ENCODE measurements at regions of chr5 and their contacts with region 1.

Region 1: GRCh38 chr5:35777358-35778087 is 79.2 kb upstream of the IL7R start:
- DNase-seq: peak; percentile 88
- H3K4me3 Mint-ChIP-seq: peak overlapping the region; percentile 46
- H3K27ac Mint-ChIP-seq: peak overlapping the region; percentile 85
- H3K4me1 Mint-ChIP-seq: peaks cover 74% of the 10 kb centered on the region
- H3K27me3 Mint-ChIP-seq: no peaks in the 10 kb centered on the region

Region 2: GRCh38 chr5:35478856-35479682 is 298.5 kb before region 1 on chr5:
- CTCF ChIA-PET with region 1: no interaction called
- intact Hi-C with region 1: no loop called
- DNase-seq: no peak
- H3K4me3 Mint-ChIP-seq: peak overlapping the region; percentile 51
- H3K27ac Mint-ChIP-seq: peak overlapping the region; percentile 81
- H3K4me1 Mint-ChIP-seq: peaks cover 9% of the 10 kb centered on the region
- H3K27me3 Mint-ChIP-seq: no peaks in the 10 kb centered on the region

Region 3: GRCh38 chr5:35518104-35518503 is 259.4 kb before region 1 on chr5:
- CTCF ChIA-PET with region 1: no interaction called
- intact Hi-C with region 1: no loop called
- DNase-seq: no peak
- H3K4me3 Mint-ChIP-seq: no peak overlapping the region
- H3K27ac Mint-ChIP-seq: no peak overlapping the region
- H3K4me1 Mint-ChIP-seq: no peaks in the 10 kb centered on the region
- H3K27me3 Mint-ChIP-seq: peaks cover under 1% of the 10 kb centered on the region

Region 4: GRCh38 chr5:35617435-35618303 is 159.9 kb before region 1 on chr5 and contains the start of gene SPEF2:
- CTCF ChIA-PET with region 1: interaction called, 8 read pairs
- intact Hi-C with region 1: loop called (anchors 1 kb)
- DNase-seq: peak; percentile 86
- H3K4me3 Mint-ChIP-seq: peak within 1 kb of the TSS; percentile 90
- H3K27ac Mint-ChIP-seq: peak within 1 kb of the TSS; percentile 88
- H3K4me1 Mint-ChIP-seq: peaks cover 16% of the 10 kb centered on the region
- H3K27me3 Mint-ChIP-seq: no peaks in the 10 kb centered on the region
- total RNA-seq, gene SPEF2: 6.5 to 6.6 TPM

Region 5: GRCh38 chr5:35657877-35658276 is 119.6 kb before region 1 on chr5:
- CTCF ChIA-PET with region 1: interaction called, 3 read pairs
- intact Hi-C with region 1: loop called (anchors 2 kb)
- DNase-seq: no peak
- H3K4me3 Mint-ChIP-seq: no peak overlapping the region
- H3K27ac Mint-ChIP-seq: peak overlapping the region; percentile 21
- H3K4me1 Mint-ChIP-seq: peaks cover 21% of the 10 kb centered on the region
- H3K27me3 Mint-ChIP-seq: no peaks in the 10 kb centered on the region

Region 6: GRCh38 chr5:35736280-35736679 is 41.2 kb before region 1 on chr5:
- CTCF ChIA-PET with region 1: interaction called, 3 read pairs
- intact Hi-C with region 1: loop called (anchors 1 kb)
- DNase-seq: peak; percentile 83
- H3K4me3 Mint-ChIP-seq: no peak overlapping the region
- H3K27ac Mint-ChIP-seq: peak overlapping the region; percentile 73
- H3K4me1 Mint-ChIP-seq: peaks cover 58% of the 10 kb centered on the region
- H3K27me3 Mint-ChIP-seq: no peaks in the 10 kb centered on the region

Region 7: GRCh38 chr5:35815089-35815936 is 37.8 kb after region 1 on chr5:
- CTCF ChIA-PET with region 1: interaction called, 56 read pairs
- intact Hi-C with region 1: loop called (anchors 1 kb)
- DNase-seq: peak; percentile 76
- H3K4me3 Mint-ChIP-seq: no peak overlapping the region
- H3K27ac Mint-ChIP-seq: no peak overlapping the region
- H3K4me1 Mint-ChIP-seq: peaks cover 45% of the 10 kb centered on the region
- H3K27me3 Mint-ChIP-seq: no peaks in the 10 kb centered on the region

Region 8: DNA sequence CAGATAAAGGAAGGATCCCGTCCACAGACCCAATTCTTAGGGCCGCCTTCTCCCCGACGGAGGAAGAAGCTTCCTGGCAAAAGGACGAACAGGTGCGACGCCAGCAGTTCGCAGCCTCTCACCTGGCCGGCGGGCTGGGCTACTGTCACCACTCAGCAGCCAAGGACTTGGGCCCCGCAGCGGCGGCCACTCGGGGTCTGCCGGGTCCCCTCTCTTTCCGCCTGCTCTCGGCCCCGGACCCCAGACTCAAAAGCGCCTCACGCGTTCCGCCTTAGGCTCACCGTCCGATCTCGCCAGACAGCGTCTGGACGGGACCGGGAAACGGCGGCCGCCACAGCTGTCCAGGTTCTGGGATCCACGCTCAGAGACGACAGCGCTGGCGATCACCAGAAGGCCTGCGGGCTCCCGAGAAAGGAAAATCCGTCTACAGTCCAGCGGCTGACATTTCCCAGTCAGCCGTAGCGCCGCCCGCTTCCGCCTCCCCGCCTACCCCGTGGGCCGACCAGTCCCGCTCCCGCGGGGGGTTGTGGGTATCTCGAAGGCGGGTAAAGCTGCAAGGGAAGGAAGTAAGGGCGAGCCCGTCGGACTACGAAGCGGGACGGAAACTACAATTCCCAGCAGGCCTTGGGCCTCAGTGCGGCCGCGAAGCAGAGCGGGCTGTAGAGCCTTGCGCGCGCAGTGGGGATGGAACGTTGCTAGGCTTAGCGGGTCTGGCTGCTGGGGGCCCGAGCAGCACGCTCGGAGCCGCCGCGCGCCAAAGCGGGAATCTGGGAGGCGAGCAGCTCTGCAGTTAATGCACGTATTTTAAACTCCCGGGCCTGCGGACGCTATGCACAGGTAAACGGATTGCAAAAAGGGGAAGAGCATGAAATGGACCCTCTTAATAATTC is 374.2 kb after region 1 on chr5 and contains the starts of genes LMBRD2 and SKP2:
- CTCF ChIA-PET with region 1: no interaction called
- intact Hi-C with region 1: loop called (anchors 5 kb)
- DNase-seq: peak; percentile 98
- H3K4me3 Mint-ChIP-seq: peak within 1 kb of the TSS; percentile 96
- H3K27ac Mint-ChIP-seq: peak within 1 kb of the TSS; percentile 76
- H3K4me1 Mint-ChIP-seq: peaks cover 67% of the 10 kb centered on the region
- H3K27me3 Mint-ChIP-seq: no peaks in the 10 kb centered on the region
- total RNA-seq, gene LMBRD2: 7.6 to 8.0 TPM
- total RNA-seq, gene SKP2: 44.4 to 48.1 TPM

Region 9: GRCh38 chr5:36611520-36612274 is 834.2 kb after region 1 on chr5:
- CTCF ChIA-PET with region 1: no interaction called
- intact Hi-C with region 1: no loop called
- DNase-seq: no peak
- H3K4me3 Mint-ChIP-seq: no peak overlapping the region
- H3K27ac Mint-ChIP-seq: no peak overlapping the region
- H3K4me1 Mint-ChIP-seq: peaks cover 7% of the 10 kb centered on the region
- H3K27me3 Mint-ChIP-seq: peaks cover 27% of the 10 kb centered on the region